AG04449 (cell line): ENCODE measurements at regions of chr15 and their contacts with region 1.

Region 1: GRCh38 chr15:75367913-75368688 is at the start of gene MAN2C1:
- DNase-seq: peak; percentile 81
- H3K4me3 ChIP-seq: peak within 1 kb of the TSS; percentile 86
- CTCF ChIP-seq: peak; percentile 90

Region 2: DNA sequence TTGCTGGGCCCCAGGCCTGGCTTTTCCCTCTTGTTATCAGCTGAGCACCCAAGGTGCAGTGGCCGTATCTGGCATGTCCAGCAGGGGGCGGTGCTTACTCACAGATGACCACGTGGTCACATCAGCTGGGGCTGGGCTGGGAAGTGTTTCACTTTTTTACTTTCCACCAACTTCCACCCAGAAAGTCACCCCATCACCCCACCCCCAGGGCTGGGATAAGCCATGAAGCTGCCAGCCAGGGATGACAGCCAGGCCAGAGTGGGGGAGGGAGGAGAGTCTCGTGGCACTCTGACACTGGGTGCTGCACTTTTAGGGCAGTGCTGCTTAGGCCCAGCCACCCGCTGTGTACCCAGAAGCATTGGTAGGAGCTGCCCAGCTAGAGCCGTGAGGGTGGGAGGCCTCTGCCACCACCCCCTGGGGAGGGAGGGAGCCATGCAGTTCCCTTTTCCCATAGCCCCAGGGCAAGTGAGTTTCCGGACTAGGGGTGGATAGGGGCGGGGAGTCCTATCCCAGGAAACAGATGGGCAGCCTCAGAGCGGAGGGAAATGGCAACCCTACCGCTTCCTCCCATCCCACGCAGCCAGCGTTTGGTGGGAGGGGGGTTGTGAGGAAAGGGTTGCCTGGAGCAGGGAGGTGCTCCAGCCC is 338.6 kb before region 1 on chr15:
- CTCF ChIA-PET with region 1: interaction called, 10 read pairs
- POLR2A ChIA-PET with region 1: no interaction called
- DNase-seq: peak; percentile 31
- H3K4me3 ChIP-seq: peak overlapping the region; percentile 21
- CTCF ChIP-seq: peak; percentile 94

Region 3: GRCh38 chr15:75380773-75381172 is 12.7 kb after region 1 on chr15:
- CTCF ChIA-PET with region 1: interaction called, 15 read pairs
- POLR2A ChIA-PET with region 1: no interaction called
- DNase-seq: no peak
- H3K4me3 ChIP-seq: no peak overlapping the region
- CTCF ChIP-seq: no peak

Region 4: DNA sequence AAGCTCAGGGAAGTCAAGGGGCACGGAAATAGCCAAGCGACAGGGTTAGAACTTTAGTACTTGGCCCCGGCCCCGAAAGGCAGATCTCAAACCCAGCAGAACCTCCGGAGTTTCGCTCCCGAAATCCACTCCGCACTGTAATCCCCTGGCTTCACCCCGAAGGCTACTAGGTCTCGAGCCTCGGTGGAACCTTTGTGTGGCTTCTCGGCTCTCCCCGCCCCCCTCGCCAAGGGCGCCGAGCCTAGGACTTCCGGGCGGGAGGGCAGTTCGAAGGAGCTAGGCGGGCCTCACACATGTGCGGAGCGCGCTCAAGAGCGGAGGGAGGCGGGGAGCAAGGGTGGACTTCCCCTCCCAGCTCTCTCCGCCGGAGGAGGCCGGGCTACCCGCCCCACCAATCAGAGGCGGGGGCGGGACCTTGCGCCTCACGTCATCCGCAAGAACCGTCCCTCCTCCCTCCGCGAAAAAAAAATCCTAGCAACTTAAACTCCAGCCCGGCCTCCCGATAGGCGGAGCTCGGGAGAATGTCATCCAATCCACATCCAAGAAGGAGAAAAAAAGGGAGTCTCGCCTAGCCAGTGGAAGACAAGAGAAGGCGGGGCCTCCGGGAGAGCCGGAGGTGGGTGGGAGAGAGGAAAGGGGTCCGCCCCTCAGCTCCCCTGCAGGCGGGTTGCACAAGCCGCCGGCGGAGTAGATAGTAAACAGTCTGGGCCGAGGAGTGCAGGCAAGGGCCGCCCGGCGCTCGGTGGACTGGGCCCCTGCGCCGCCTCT is 85.8 kb after region 1 on chr15:
- CTCF ChIA-PET with region 1: interaction called, 16 read pairs
- POLR2A ChIA-PET with region 1: interaction called, 12 read pairs
- DNase-seq: peak; percentile 99
- H3K4me3 ChIP-seq: peak overlapping the region; percentile 89
- CTCF ChIP-seq: no peak

Region 5: GRCh38 chr15:75684642-75685041 is 316.5 kb after region 1 on chr15:
- CTCF ChIA-PET with region 1: interaction called, 21 read pairs
- POLR2A ChIA-PET with region 1: interaction called, 4 read pairs
- DNase-seq: no peak
- H3K4me3 ChIP-seq: no peak overlapping the region
- CTCF ChIP-seq: no peak